ENCODE measurements at regions of chr4 and their contacts with region 1.

Region 1: DNA sequence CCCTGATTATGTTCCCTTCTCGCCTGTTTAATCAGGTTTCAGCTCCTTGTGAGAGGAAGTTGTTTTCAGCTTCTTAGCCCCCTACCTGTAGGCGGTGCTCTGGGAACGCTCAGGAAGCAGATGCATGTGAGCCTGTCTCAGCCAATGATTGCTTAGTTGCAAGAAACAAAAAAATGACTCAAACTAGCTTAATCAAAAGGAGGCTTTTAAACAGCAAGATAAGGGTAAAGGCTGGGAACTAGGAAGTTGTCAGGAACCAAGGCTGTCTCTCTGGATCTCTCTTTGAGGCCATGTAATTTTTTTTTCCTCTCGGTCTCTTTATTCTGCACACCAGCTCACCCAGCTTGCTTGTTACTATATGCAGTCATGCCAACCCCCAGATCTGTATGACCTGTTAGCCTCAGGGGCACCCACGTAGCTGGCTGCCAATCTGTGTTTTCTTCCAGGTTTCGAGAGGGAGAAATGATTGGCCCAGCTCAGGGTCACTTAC is 109.1 kb downstream of the PTTG2 start:
- DNase-seq: peak; percentile 64
- H3K4me3 Mint-ChIP-seq: no peak overlapping the region
- H3K27ac Mint-ChIP-seq: no peak overlapping the region
- H3K4me1 Mint-ChIP-seq: peaks cover 8% of the 10 kb centered on the region
- H3K27me3 Mint-ChIP-seq: no peaks in the 10 kb centered on the region
- CTCF ChIP-seq: peak; percentile 28

Region 2: GRCh38 chr4:38013461-38014366 is 55.6 kb before region 1 on chr4:
- CTCF ChIA-PET with region 1: no interaction called
- intact Hi-C with region 1: no loop called
- DNase-seq: no peak
- H3K4me3 Mint-ChIP-seq: no peak overlapping the region
- H3K27ac Mint-ChIP-seq: no peak overlapping the region
- H3K4me1 Mint-ChIP-seq: no peaks in the 10 kb centered on the region
- H3K27me3 Mint-ChIP-seq: no peaks in the 10 kb centered on the region
- CTCF ChIP-seq: no peak

Region 3: GRCh38 chr4:38154681-38155608 is 85.6 kb after region 1 on chr4:
- CTCF ChIA-PET with region 1: interaction called, 10 read pairs
- intact Hi-C with region 1: no loop called
- DNase-seq: peak; percentile 44
- H3K4me3 Mint-ChIP-seq: no peak overlapping the region
- H3K27ac Mint-ChIP-seq: peak overlapping the region; percentile 50
- H3K4me1 Mint-ChIP-seq: peaks cover 43% of the 10 kb centered on the region
- H3K27me3 Mint-ChIP-seq: no peaks in the 10 kb centered on the region
- CTCF ChIP-seq: no peak